Right cardiac atrium (tissue), 5 donors: ENCODE measurements at regions of chr11 and their contacts with region 1.

Region 1: GRCh38 chr11:114060392-114061350 is 1.2 kb downstream of the ZBTB16 start:
- DNase-seq: peak; percentile 52 to 78 (median 76)
- ATAC-seq: peak; percentile 4 to 13
- H3K4me3 ChIP-seq: peak overlapping the region; percentile 98
- H3K27ac ChIP-seq: peak overlapping the region; percentile 99
- H3K4me1 ChIP-seq: peaks cover 40% of the 10 kb centered on the region
- H3K27me3 ChIP-seq: no peaks in the 10 kb centered on the region

Region 2: GRCh38 chr11:113721462-113722066 is 339.1 kb before region 1 on chr11:
- intact Hi-C with region 1: no loop called
- DNase-seq: peak in 1 of 3 donors; percentile 40
- ATAC-seq: peak; percentile 57 to 85
- H3K4me3 ChIP-seq: no peak overlapping the region
- H3K27ac ChIP-seq: peak overlapping the region; percentile 24
- H3K4me1 ChIP-seq: no peaks in the 10 kb centered on the region
- H3K27me3 ChIP-seq: no peaks in the 10 kb centered on the region

Region 3: DNA sequence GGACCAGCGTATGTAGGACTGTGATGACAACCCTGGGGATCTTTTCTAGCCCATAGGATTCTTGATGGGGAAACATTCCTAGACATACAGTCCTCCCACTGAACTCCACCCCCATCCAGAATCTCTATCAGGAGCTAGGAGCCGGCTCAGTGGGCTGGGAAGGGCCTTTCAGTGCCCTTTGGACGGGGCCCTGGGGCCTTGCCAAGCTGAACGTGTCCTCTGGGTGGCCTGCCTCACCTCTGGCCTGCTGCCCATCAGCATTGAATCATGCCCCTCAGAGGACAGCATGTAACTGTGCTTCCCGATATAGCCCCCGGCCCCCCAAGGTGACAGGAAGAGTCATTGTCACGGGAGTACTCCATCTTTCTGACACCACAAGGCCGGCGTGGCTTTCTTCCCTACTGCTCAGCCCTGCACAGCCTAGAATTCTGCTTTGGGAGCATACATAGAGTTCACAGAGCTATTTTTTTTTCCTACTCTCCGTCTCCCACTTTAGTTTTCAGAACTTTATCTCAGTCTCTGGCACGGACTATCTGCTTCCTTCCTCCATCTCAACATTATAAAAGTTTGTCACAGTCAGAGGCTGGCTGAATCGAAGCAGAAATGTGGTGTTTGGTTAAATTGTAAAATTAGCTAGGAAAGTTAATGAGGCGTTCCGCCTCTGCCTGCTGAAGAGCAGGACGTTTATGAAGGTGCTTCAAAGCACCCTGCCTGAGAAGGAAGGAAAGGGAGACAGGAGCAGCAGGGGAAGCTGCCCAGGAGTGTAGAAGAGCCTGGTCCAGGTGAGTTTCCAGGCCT is 110.8 kb after region 1 on chr11:
- intact Hi-C with region 1: loop called in 3 of 4 experiments (anchors 5 kb)
- DNase-seq: peak; percentile 95 to 98 (median 97)
- ATAC-seq: peak; percentile 84 to 90
- H3K4me3 ChIP-seq: no peak overlapping the region
- H3K27ac ChIP-seq: peak overlapping the region; percentile 100
- H3K4me1 ChIP-seq: peaks cover 71% of the 10 kb centered on the region
- H3K27me3 ChIP-seq: no peaks in the 10 kb centered on the region

Region 4: GRCh38 chr11:114180301-114181055 is 119.8 kb after region 1 on chr11:
- intact Hi-C with region 1: loop called in 2 of 4 experiments (anchors 5 to 10 kb)
- DNase-seq: peak in 2 of 3 donors; percentile 49 to 78
- ATAC-seq: peak; percentile 51 to 59
- H3K4me3 ChIP-seq: peak overlapping the region; percentile 48
- H3K27ac ChIP-seq: peak overlapping the region; percentile 100
- H3K4me1 ChIP-seq: peaks cover 67% of the 10 kb centered on the region
- H3K27me3 ChIP-seq: no peaks in the 10 kb centered on the region

Region 5: DNA sequence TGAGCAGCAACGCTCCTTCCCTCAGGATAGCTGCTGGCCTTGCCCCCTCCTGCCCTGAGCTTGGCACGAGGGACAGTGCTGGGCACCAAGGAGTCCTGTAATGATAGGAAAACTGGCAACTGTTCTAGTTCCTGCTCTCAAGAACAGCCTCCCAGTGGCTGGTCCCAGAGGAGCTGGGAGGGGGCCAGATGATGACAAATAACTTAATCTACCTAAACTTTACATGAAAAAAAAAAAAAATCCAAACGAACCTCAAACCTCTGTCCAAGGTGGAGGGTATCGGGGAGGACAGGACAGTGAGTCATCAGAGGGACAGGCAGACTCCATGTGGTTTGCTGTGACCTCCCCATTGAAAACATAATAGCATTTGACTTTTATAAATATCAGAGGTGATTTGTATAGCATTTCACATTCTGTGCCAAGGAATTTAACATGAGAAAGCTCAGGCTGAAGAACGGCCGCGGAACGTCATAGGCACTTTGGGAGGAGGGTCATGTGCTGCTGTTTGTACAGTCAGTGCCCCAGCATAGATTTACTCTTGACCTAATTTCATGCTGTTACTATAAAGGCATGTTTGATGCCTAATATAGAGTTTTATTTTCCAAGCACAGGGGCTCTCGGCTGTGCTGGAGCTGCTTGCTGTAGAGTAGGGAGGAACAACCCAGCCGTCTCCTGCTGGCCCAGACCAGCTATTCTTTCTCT is 137.3 kb after region 1 on chr11:
- intact Hi-C with region 1: no loop called
- DNase-seq: peak; percentile 74 to 88 (median 83)
- ATAC-seq: peak; percentile 79 to 82
- H3K4me3 ChIP-seq: no peak overlapping the region
- H3K27ac ChIP-seq: peak overlapping the region; percentile 99
- H3K4me1 ChIP-seq: peaks cover 55% of the 10 kb centered on the region
- H3K27me3 ChIP-seq: no peaks in the 10 kb centered on the region